ENCODE measurements at regions of chr6 and their contacts with region 1.

Region 1: GRCh38 chr6:167350731-167351655 is 26.1 kb downstream of the TTLL2 start:
- DNase-seq: peak; percentile 52 to 67
- ATAC-seq: peak; percentile 70 to 85 (median 74)
- H3K4me3 ChIP-seq: peak overlapping the region; percentile 14 to 58 (median 50)
- H3K27ac ChIP-seq: peak overlapping the region in 8 of 10 donors; percentile 3 to 78 (median 61)
- H3K4me1 ChIP-seq: peaks cover 0 to 21% (median 16%) of the 10 kb centered on the region in 9 donors
- H3K27me3 ChIP-seq: peaks cover 0 to 52% (median 34%) of the 10 kb centered on the region in 7 donors
- CTCF ChIP-seq: peak; percentile 49 to 80 (median 72)

Region 2: GRCh38 chr6:166800137-166800536 is 550.9 kb before region 1 on chr6:
- intact Hi-C with region 1: loop called in 1 of 10 experiments (anchors 10 kb)
- DNase-seq: no peak
- ATAC-seq: no peak
- H3K4me3 ChIP-seq: no peak overlapping the region
- H3K27ac ChIP-seq: no peak overlapping the region
- H3K4me1 ChIP-seq: no peaks in the 10 kb centered on the region
- H3K27me3 ChIP-seq: no peaks in the 10 kb centered on the region
- CTCF ChIP-seq: no peak

Region 3: GRCh38 chr6:167212713-167213005 is 138.3 kb before region 1 on chr6:
- intact Hi-C with region 1: loop called in 1 of 10 experiments (anchors 10 kb)
- DNase-seq: no peak
- ATAC-seq: no peak
- H3K4me3 ChIP-seq: no peak overlapping the region
- H3K27ac ChIP-seq: no peak overlapping the region
- H3K4me1 ChIP-seq: no peaks in the 10 kb centered on the region
- H3K27me3 ChIP-seq: peaks cover 0 to 21% (median 5%) of the 10 kb centered on the region in 7 donors
- CTCF ChIP-seq: no peak

Region 4: GRCh38 chr6:167420858-167421766 is 70.1 kb after region 1 on chr6:
- intact Hi-C with region 1: no loop called
- DNase-seq: no peak
- ATAC-seq: no peak
- H3K4me3 ChIP-seq: no peak overlapping the region
- H3K27ac ChIP-seq: no peak overlapping the region
- H3K4me1 ChIP-seq: no peaks in the 10 kb centered on the region
- H3K27me3 ChIP-seq: peaks cover 0 to 32% (median 22%) of the 10 kb centered on the region in 7 donors
- CTCF ChIP-seq: no peak

Measured in heart right ventricle (tissue), 16 donors.